Psoas muscle (tissue), 8 donors: ENCODE measurements at regions of chr16 and their contacts with region 1.

Region 1: GRCh38 chr16:11977376-11978041 is 975 bp downstream of the SNX29 start:
- DNase-seq: peak in 1 of 2 donors; percentile 28
- ATAC-seq: peak in 2 of 4 donors; percentile 35 to 54
- H3K4me3 ChIP-seq: peak overlapping the region; percentile 80
- H3K27ac ChIP-seq: peak overlapping the region; percentile 80
- H3K4me1 ChIP-seq: peaks cover 12% of the 10 kb centered on the region
- H3K27me3 ChIP-seq: no peaks in the 10 kb centered on the region
- CTCF ChIP-seq: no peak

Region 2: GRCh38 chr16:11799509-11800381 is 177.8 kb before region 1 on chr16:
- intact Hi-C with region 1: no loop called
- DNase-seq: no peak
- ATAC-seq: no peak
- H3K4me3 ChIP-seq: peak overlapping the region; percentile 99
- H3K27ac ChIP-seq: peak overlapping the region; percentile 36
- H3K4me1 ChIP-seq: peaks cover 29% of the 10 kb centered on the region
- H3K27me3 ChIP-seq: no peaks in the 10 kb centered on the region
- CTCF ChIP-seq: no peak

Region 3: GRCh38 chr16:11915644-11916523 is 61.6 kb before region 1 on chr16 and contains the start of gene GSPT1:
- intact Hi-C with region 1: loop called in 1 of 2 experiments (anchors 2 kb)
- DNase-seq: peak; percentile 100
- ATAC-seq: peak; percentile 94 to 96 (median 96)
- H3K4me3 ChIP-seq: peak within 1 kb of the TSS; percentile 91
- H3K27ac ChIP-seq: peak within 1 kb of the TSS; percentile 98
- H3K4me1 ChIP-seq: peaks cover 19% of the 10 kb centered on the region
- H3K27me3 ChIP-seq: peaks cover 0 to 3% (median 0%) of the 10 kb centered on the region in 3 donors
- CTCF ChIP-seq: no peak
- total RNA-seq, gene GSPT1: 106 to 202 (median 176) TPM

Region 4: GRCh38 chr16:12062343-12063005 is 85.0 kb after region 1 on chr16:
- intact Hi-C with region 1: loop called in 1 of 2 experiments (anchors 5 kb)
- DNase-seq: peak; percentile 90 to 92
- ATAC-seq: peak; percentile 75 to 91 (median 88)
- H3K4me3 ChIP-seq: no peak overlapping the region
- H3K27ac ChIP-seq: peak overlapping the region; percentile 71
- H3K4me1 ChIP-seq: peaks cover 17% of the 10 kb centered on the region
- H3K27me3 ChIP-seq: no peaks in the 10 kb centered on the region
- CTCF ChIP-seq: no peak